GM12878 (cell line): ENCODE measurements at regions of chr22 and their contacts with region 1.

Region 1: GRCh38 chr22:25540166-25540907 is 24.1 kb upstream of the GRK3 start:
- DNase-seq: no peak
- ATAC-seq: no peak
- H3K4me3 ChIP-seq: no peak overlapping the region
- H3K27ac ChIP-seq: no peak overlapping the region
- H3K4me1 ChIP-seq: no peaks in the 10 kb centered on the region
- H3K27me3 ChIP-seq: no peaks in the 10 kb centered on the region
- CTCF ChIP-seq: no peak
- EP300 ChIP-seq: no peak
- POLR2A ChIP-seq: no peak
- RAD21 ChIP-seq: no peak

Region 2: GRCh38 chr22:25395915-25396314 is 144.4 kb before region 1 on chr22:
- CTCF ChIA-PET with region 1: no interaction called
- POLR2A ChIA-PET with region 1: no interaction called
- RAD21 ChIA-PET with region 1: no interaction called
- SMC1A ChIA-PET with region 1: no interaction called
- in situ Hi-C with region 1: no loop called
- intact Hi-C with region 1: no loop called
- DNase-seq: no peak
- ATAC-seq: no peak
- H3K4me3 ChIP-seq: no peak overlapping the region
- H3K27ac ChIP-seq: no peak overlapping the region
- H3K4me1 ChIP-seq: peaks cover 26% of the 10 kb centered on the region
- H3K27me3 ChIP-seq: no peaks in the 10 kb centered on the region
- CTCF ChIP-seq: no peak
- EP300 ChIP-seq: no peak
- POLR2A ChIP-seq: no peak
- RAD21 ChIP-seq: no peak

Region 3: DNA sequence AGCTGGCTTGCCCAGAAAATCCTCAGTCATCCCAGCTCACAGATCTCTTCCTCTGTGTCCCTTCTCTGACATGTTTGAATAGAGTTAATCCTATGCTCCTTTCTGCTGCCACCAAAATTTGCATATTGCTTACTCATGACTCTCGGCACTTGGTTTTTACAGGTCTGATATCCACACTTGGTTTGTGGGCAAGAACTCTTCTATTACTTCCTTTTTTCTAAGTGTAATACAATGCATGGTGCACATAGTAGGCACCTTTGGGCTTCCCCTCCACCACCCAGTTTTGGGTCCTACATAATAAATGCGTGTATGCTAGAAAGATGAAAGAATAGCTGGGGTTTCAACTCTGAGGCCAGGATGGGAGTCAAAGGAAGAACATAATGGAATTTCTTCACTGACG is 45.6 kb before region 1 on chr22:
- CTCF ChIA-PET with region 1: interaction called, 23 read pairs
- POLR2A ChIA-PET with region 1: no interaction called
- RAD21 ChIA-PET with region 1: interaction called, 4 read pairs
- SMC1A ChIA-PET with region 1: interaction called, 18 read pairs
- in situ Hi-C with region 1: no loop called
- intact Hi-C with region 1: no loop called
- DNase-seq: peak; percentile 72
- ATAC-seq: peak; percentile 98
- H3K4me3 ChIP-seq: no peak overlapping the region
- H3K27ac ChIP-seq: no peak overlapping the region
- H3K4me1 ChIP-seq: peaks cover 13% of the 10 kb centered on the region
- H3K27me3 ChIP-seq: no peaks in the 10 kb centered on the region
- CTCF ChIP-seq: no peak
- EP300 ChIP-seq: peak; percentile 74 to 79; a peak in 3 of 4 replicates
- POLR2A ChIP-seq: no peak
- RAD21 ChIP-seq: no peak

Region 4: GRCh38 chr22:25564320-25564978 is 24.1 kb after region 1 on chr22 and contains the start of gene GRK3:
- CTCF ChIA-PET with region 1: interaction called, 89 read pairs
- POLR2A ChIA-PET with region 1: interaction called, 6 read pairs
- RAD21 ChIA-PET with region 1: interaction called, 202 read pairs
- SMC1A ChIA-PET with region 1: interaction called, 170 read pairs
- in situ Hi-C with region 1: no loop called
- intact Hi-C with region 1: no loop called
- DNase-seq: no peak
- ATAC-seq: peak; percentile 71
- H3K4me3 ChIP-seq: peak within 1 kb of the TSS; percentile 94
- H3K27ac ChIP-seq: peak within 1 kb of the TSS; percentile 77
- H3K4me1 ChIP-seq: peaks cover 25% of the 10 kb centered on the region
- H3K27me3 ChIP-seq: no peaks in the 10 kb centered on the region
- CTCF ChIP-seq: no peak
- EP300 ChIP-seq: no peak
- POLR2A ChIP-seq: peak; percentile 79
- RAD21 ChIP-seq: no peak
- polyA plus RNA-seq, gene GRK3: 4.3 to 4.6 TPM

Region 5: DNA sequence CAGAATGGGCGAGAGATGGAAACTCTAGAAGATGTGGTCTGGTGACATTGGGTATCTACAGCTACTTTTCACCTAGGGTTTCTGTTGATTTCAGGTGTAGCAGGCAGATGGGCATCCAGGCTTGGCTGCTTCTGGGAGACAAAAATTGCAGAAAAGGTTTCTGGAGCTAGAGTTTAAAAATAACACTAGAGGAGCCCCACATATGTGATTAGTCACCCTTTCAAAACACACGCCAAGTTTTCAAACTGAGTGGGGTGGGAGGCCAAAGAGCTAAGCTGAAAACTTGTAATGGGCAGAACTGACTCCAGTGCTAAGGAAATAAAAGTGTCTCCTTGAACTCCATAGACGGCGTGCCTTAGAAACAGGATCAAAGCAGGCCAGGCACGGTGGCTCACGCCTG is 104.9 kb after region 1 on chr22:
- CTCF ChIA-PET with region 1: interaction called, 3 read pairs
- POLR2A ChIA-PET with region 1: interaction called, 3 read pairs
- RAD21 ChIA-PET with region 1: interaction called, 17 read pairs
- SMC1A ChIA-PET with region 1: interaction called, 7 read pairs
- in situ Hi-C with region 1: no loop called
- intact Hi-C with region 1: no loop called
- DNase-seq: no peak
- ATAC-seq: no peak
- H3K4me3 ChIP-seq: no peak overlapping the region
- H3K27ac ChIP-seq: no peak overlapping the region
- H3K4me1 ChIP-seq: peaks cover 13% of the 10 kb centered on the region; the same call in 1 of the 2 replicates
- H3K27me3 ChIP-seq: no peaks in the 10 kb centered on the region
- CTCF ChIP-seq: no peak
- EP300 ChIP-seq: no peak
- POLR2A ChIP-seq: no peak
- RAD21 ChIP-seq: no peak

Region 6: DNA sequence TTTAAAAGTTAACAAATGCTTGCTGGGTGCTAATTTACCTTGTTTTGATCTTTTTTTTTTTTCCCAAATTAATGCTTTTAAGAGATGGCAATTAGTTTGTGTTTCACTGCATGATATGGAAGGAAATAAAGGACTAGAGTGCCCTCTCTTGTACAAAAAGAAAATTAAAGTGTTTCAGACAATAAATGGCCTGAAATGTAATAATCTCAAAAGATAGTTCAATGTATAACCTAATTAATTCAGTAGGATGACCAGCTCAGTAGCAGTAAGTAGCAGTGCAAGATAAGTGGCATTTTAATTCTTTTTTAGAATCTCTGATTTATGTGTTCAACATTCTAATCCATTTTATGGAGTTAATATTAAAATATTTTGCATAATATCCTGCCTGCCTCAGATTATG is 161.7 kb after region 1 on chr22:
- CTCF ChIA-PET with region 1: interaction called, 88 read pairs
- POLR2A ChIA-PET with region 1: no interaction called
- RAD21 ChIA-PET with region 1: interaction called, 43 read pairs
- SMC1A ChIA-PET with region 1: interaction called, 61 read pairs
- in situ Hi-C with region 1: no loop called
- intact Hi-C with region 1: loop called (anchors 1 kb)
- DNase-seq: no peak
- ATAC-seq: peak; percentile 61
- H3K4me3 ChIP-seq: no peak overlapping the region
- H3K27ac ChIP-seq: no peak overlapping the region; the same call in 1 of the 2 replicates
- H3K4me1 ChIP-seq: peaks cover 15% of the 10 kb centered on the region; the same call in 1 of the 2 replicates
- H3K27me3 ChIP-seq: no peaks in the 10 kb centered on the region
- CTCF ChIP-seq: peak; percentile 15 to 57 (median 33); a peak in 2 of 6 replicates
- EP300 ChIP-seq: no peak
- POLR2A ChIP-seq: no peak
- RAD21 ChIP-seq: peak; percentile 72

Region 7: GRCh38 chr22:25777870-25778269 is 237.5 kb after region 1 on chr22:
- CTCF ChIA-PET with region 1: interaction called, 64 read pairs
- POLR2A ChIA-PET with region 1: interaction called, 4 read pairs
- RAD21 ChIA-PET with region 1: interaction called, 57 read pairs
- SMC1A ChIA-PET with region 1: interaction called, 52 read pairs
- in situ Hi-C with region 1: no loop called
- intact Hi-C with region 1: loop called (anchors 1 kb)
- DNase-seq: peak; percentile 11
- ATAC-seq: peak; percentile 70
- H3K4me3 ChIP-seq: no peak overlapping the region
- H3K27ac ChIP-seq: no peak overlapping the region
- H3K4me1 ChIP-seq: no peaks in the 10 kb centered on the region
- H3K27me3 ChIP-seq: no peaks in the 10 kb centered on the region
- CTCF ChIP-seq: peak; percentile 25 to 44 (median 44); a peak in 5 of 6 replicates
- EP300 ChIP-seq: no peak
- POLR2A ChIP-seq: no peak
- RAD21 ChIP-seq: peak; percentile 36; the same call in 1 of the 2 replicates